ENCODE measurements at regions of chrX and their contacts with region 1.

Region 1: DNA sequence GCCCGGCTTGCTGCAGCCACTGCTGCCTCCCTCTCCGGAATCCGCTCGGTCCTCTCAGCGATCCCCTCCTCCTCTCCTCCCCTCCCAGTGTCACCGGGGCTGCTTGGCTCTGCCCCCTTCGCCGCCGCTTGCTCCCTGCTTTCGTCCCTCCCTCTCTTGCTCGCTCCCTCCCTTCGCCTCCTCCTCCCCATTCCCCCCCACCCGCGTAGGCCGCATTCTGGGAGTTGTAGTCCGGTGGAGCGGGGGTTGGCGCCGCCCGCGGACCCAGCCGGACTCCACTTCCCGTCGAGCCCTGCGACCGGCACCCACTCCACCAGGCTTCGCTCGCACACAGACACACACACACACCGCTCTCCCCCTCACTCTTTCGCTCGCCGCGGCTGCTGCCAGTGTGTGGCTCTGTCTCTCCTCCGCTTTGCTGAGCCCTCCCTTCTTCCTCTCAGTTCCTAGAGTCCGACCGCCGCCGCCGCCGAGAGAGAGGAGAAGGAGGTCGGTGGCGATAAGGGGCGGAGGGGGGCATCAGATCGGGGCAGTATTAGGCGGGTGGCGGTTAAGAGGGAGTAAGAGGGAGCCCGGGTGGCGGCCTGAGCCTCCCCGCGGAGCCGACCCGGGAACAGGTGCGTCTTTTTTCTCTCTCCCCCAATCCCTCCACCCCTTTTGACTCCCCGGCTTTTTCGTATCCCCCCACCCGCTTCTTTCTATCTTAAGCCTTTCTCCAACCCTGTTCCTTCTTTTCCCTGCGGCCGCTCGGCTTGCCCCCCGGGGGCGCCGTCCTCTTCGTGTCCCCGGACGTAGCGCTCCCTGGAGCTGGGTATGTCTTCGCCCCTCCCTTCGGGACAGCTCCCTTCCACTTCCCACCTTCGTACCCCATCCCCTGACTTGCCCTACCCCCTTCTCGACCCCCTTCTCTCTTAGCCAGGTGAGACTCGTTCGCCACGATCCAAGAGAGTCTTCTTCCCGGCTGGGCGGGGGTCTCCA is at the start of gene BCORL1:
- DNase-seq: peak; percentile 77
- H3K4me3 Mint-ChIP-seq: peak within 1 kb of the TSS; percentile 81
- H3K27ac Mint-ChIP-seq: peak within 1 kb of the TSS; percentile 23
- H3K4me1 Mint-ChIP-seq: peaks cover 16% of the 10 kb centered on the region
- H3K27me3 Mint-ChIP-seq: peaks cover 15% of the 10 kb centered on the region
- total RNA-seq, gene BCORL1: 8.8 and 9.3 TPM in 2 replicates

Region 2: DNA sequence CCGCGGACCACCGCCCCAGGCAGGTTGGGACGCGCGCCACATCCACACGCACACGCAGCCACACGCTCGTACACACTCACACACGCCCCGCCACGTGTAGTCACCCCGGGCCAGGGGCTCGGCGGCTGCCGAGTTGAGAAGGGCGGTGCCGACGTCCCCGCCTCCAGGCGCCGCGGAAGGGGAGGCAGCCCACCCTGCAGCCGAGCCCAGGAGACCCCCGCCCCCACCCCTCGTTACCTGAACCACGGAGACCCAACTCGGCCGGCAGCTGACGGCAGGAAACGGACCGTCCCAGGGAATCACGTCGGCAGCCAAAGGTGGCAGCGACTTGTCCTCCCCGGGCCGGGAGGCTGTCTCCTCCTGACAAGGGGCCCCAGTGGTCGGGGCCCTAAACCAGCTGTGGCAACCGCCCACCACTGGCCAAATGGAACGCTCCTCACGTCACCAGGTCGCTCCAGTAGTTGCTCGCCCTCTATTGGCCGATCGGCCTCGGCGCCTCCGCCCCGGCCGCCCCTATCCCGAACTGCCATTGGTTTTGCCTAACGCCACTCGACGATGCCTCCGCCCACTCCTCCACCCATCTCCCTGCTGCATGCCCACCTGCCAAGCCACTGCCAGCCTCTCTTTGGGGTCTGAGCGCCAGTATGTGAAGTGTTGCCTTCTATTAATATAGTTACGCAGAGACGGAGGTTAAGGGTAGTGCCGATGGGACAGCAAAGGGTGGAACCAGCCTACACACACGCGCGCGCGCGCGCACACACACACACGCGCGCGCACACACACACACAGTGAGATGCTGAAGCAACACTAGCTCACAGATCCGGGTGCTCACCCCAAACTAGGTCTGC is 138.9 kb before region 1 on chrX and contains the start of gene ZDHHC9:
- intact Hi-C with region 1: loop called (anchors 5 kb)
- DNase-seq: peak; percentile 78
- H3K4me3 Mint-ChIP-seq: peak within 1 kb of the TSS; percentile 93
- H3K27ac Mint-ChIP-seq: peak within 1 kb of the TSS; percentile 88
- H3K4me1 Mint-ChIP-seq: peaks cover 28% of the 10 kb centered on the region
- H3K27me3 Mint-ChIP-seq: peaks cover 4% of the 10 kb centered on the region
- total RNA-seq, gene ZDHHC9: 13.6 and 14.2 TPM in 2 replicates

Region 3: GRCh38 chrX:129931411-129932015 is 51.0 kb before region 1 on chrX:
- intact Hi-C with region 1: loop called (anchors 1 kb)
- DNase-seq: peak; percentile 52
- H3K4me3 Mint-ChIP-seq: peak overlapping the region; percentile 81
- H3K27ac Mint-ChIP-seq: peak overlapping the region; percentile 80
- H3K4me1 Mint-ChIP-seq: peaks cover 5% of the 10 kb centered on the region
- H3K27me3 Mint-ChIP-seq: peaks cover 9% of the 10 kb centered on the region

Region 4: DNA sequence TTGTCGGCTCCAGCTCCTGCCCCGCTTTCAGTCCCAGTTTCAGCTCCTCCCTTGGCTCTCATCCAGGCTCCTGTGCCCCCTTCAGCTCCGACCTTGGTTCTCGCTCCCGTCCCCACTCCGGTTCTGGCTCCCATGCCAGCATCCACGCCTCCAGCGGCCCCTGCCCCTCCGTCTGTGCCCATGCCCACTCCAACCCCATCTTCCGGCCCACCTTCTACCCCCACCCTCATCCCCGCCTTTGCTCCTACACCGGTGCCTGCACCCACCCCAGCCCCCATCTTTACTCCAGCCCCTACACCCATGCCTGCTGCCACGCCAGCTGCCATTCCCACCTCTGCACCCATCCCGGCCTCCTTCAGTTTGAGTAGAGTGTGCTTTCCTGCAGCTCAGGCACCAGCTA is 31.1 kb after region 1 on chrX:
- intact Hi-C with region 1: no loop called
- DNase-seq: no peak
- H3K4me3 Mint-ChIP-seq: no peak overlapping the region
- H3K27ac Mint-ChIP-seq: no peak overlapping the region
- H3K4me1 Mint-ChIP-seq: no peaks in the 10 kb centered on the region
- H3K27me3 Mint-ChIP-seq: no peaks in the 10 kb centered on the region

Region 5: GRCh38 chrX:130024127-130024526 is 41.6 kb after region 1 on chrX:
- intact Hi-C with region 1: loop called (anchors 1 kb)
- DNase-seq: peak; percentile 78
- H3K4me3 Mint-ChIP-seq: peak overlapping the region; percentile 60
- H3K27ac Mint-ChIP-seq: peak overlapping the region; percentile 44
- H3K4me1 Mint-ChIP-seq: peaks cover 14% of the 10 kb centered on the region
- H3K27me3 Mint-ChIP-seq: no peaks in the 10 kb centered on the region

Region 6: GRCh38 chrX:130091958-130092522 is 109.5 kb after region 1 on chrX:
- intact Hi-C with region 1: no loop called
- DNase-seq: peak; percentile 79
- H3K4me3 Mint-ChIP-seq: peak overlapping the region; percentile 83
- H3K27ac Mint-ChIP-seq: peak overlapping the region; percentile 94
- H3K4me1 Mint-ChIP-seq: peaks cover 29% of the 10 kb centered on the region
- H3K27me3 Mint-ChIP-seq: no peaks in the 10 kb centered on the region

Region 7: DNA sequence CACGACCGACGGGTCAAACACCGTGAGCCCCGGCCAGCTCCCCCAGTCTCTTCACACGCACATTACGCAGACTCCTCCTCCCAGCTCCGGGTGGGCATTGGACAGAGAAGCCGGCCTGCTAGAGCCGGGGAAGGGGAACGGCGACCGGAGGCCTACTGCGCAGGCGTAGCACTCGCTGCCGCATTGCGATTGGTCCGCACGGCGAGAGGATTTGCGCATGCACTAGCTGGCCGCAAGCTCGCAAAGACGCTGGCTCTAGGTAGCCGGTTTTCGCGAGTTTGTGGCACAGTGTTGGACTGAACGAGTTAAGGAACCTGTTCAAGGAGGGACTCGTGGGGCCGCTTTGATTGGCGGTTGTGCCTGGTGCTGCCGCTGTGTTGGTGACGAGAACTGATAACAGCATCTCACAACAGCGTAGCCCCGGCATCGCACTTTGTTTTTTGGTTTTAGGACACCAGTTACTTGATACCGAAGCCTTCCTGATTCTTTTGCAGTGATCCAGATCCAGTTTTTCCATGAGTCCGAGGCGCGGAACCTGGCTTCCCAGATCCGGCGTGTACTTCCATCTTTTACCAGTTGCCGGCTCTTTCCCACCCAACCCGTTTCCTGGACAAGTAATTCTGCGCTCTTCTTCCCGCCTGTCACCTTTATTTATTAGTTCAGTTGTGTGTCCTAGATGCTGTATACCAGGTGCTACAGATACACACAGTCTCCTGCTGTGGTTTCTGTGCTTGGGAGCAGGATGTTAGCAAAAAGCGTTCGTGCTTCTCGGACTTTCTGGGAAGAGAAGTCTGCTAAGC is 183.3 kb after region 1 on chrX and contains the start of gene AIFM1:
- intact Hi-C with region 1: loop called (anchors 1 kb)
- DNase-seq: peak; percentile 86
- H3K4me3 Mint-ChIP-seq: peak within 1 kb of the TSS; percentile 95
- H3K27ac Mint-ChIP-seq: peak within 1 kb of the TSS; percentile 98
- H3K4me1 Mint-ChIP-seq: peaks cover 20% of the 10 kb centered on the region
- H3K27me3 Mint-ChIP-seq: no peaks in the 10 kb centered on the region
- total RNA-seq, gene AIFM1: 46.0 and 50.2 TPM in 2 replicates

Region 8: DNA sequence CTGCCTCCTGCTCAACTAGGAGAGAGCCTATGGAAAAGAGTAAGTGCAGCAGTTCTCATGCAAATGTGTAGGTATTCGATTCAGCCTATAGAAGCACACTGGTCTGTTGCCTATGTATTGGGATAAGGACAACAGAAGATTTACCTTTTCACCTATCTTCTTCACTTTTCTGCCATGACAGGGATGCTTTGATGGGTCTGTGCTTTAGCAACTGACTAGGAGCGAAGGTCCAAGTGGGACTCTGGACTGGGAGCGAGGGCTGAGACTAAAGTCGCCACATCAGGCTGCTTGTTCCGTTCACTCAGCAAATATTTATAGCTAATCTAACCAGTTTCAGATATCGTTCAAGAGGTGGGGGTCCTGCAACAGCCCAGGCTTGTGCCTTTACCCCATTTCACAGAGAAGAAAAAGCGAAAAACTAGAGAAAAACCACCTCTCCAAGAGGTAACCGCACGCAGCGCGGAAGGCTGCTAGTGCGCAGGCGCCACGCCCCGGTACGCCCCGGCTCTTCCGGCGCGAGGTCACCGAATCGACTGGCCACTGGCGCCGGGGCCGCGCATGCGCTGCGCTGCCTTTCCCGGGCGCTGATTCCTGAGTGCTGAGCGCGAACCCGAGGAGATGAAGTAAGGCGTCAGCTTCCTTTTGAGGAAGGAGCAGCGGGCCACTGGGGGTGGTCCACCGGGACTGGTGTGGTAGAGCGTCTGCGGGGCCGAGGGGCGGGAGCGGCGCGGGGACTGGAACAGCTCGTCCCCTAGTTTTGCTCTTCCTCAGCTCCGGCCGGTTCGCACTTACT is 419.0 kb after region 1 on chrX and contains the start of gene RBMX2:
- intact Hi-C with region 1: loop called (anchors 5 kb)
- DNase-seq: peak; percentile 64
- H3K4me3 Mint-ChIP-seq: peak within 1 kb of the TSS; percentile 100
- H3K27ac Mint-ChIP-seq: peak within 1 kb of the TSS; percentile 89
- H3K4me1 Mint-ChIP-seq: no peaks in the 10 kb centered on the region
- H3K27me3 Mint-ChIP-seq: peaks cover 6% of the 10 kb centered on the region
- total RNA-seq, gene RBMX2: 26.0 and 26.3 TPM in 2 replicates

Measured in activated T-helper 1 cell treated with anti-CD3 and anti-CD28 coated beads, Interleukin-12 subunit alpha, Interleukin-12 subunit beta, Interleukin-2, Interleukin-4 antibody, amounts not matched to agents 30 ng/mL and 10 ng/mL and 1 ng/mL, durations not matched to agents 14 hours and 24 hours and 36 hours (primary cell).